ENCODE measurements at regions of chr4 and their contacts with region 1.

Region 1: GRCh38 chr4:42673082-42673425 is 16.1 kb upstream of the ATP8A1 start:
- DNase-seq: no peak
- H3K4me3 Mint-ChIP-seq: no peak overlapping the region
- H3K27ac Mint-ChIP-seq: peak overlapping the region; percentile 69
- H3K4me1 Mint-ChIP-seq: peaks cover 30% of the 10 kb centered on the region
- H3K27me3 Mint-ChIP-seq: no peaks in the 10 kb centered on the region

Region 2: DNA sequence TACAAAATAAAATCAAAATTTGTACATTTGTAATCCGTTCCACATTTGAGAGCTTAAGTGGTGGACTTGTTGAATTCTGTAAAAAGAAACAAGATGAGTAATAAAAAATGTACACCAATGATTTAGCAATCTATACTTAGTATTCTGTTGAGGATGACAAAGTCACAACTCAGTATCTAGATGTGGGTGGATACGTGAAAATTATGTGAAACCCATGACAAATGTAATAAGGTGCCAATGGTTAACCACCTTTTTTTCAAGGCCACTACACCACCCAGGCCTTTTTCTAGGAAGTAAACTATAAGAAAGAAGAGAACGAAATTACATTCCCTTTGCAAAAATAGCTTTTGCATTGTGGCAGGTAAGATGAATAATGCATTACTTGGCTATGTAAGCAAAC is 93.2 kb before region 1 on chr4:
- intact Hi-C with region 1: loop called (anchors 1 kb)
- DNase-seq: no peak
- H3K4me3 Mint-ChIP-seq: no peak overlapping the region
- H3K27ac Mint-ChIP-seq: peak overlapping the region; percentile 38
- H3K4me1 Mint-ChIP-seq: peaks cover 15% of the 10 kb centered on the region
- H3K27me3 Mint-ChIP-seq: no peaks in the 10 kb centered on the region

Region 3: DNA sequence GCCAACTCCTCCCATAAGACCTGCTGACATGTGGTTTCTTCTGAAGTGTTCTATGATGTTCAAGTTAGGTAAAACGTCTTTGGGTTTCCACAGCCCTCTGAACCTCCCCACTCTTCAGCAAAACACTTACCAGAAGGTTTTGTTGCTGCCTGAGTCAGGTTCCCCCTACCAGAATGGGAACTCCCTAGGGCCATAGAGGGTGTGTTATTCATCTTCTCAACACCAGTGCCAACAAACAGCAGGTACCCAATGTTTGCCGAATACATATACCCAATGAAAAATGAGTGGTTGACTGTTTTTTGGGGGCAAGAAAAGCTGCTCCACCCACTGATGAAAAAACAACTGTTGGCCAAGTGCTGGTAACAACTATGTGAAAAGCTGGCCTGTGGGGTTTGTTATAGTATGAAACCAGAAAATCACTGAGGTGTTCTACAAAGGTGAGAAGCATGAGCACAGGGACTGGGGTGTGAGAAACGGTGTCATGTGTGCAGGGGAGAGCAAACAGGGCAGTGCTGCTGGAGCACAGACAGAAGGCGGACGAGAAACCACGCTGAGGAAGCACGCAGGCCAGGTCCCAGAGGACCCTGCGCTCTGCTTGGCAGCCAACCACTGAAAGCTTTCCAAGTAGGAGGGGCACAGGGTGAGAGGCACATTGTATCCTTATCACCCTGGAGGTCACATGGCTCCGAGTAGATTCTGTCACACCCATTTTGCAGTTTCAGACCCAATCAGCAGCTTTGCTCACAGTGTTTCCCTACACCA is 45.0 kb before region 1 on chr4:
- intact Hi-C with region 1: loop called (anchors 5 kb)
- DNase-seq: no peak
- H3K4me3 Mint-ChIP-seq: no peak overlapping the region
- H3K27ac Mint-ChIP-seq: peak overlapping the region; percentile 75
- H3K4me1 Mint-ChIP-seq: peaks cover 26% of the 10 kb centered on the region
- H3K27me3 Mint-ChIP-seq: no peaks in the 10 kb centered on the region